Psoas muscle (tissue), 8 donors: ENCODE measurements at regions of chr14 and their contacts with region 1.

Region 1: DNA sequence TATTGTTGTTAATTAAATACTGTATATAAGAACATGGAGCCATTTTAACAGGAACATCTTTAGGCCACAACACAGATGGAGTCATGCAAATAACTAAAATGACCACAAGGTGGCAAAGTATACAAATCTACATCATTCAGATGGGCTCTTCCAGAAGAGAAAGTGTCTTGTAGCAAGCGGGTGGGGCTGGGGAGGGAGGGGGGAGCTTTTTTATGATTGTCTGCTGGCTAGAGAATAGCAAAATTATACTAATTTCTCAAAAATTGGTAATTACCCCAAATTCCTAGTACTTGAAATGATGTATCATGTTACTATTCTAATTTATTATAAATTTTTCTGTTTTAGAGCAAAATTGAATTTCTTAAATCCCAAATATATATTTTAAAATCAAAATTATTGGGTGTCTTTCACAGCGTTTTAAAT is 378.7 kb downstream of the PRKD1 start:
- DNase-seq: no peak
- ATAC-seq: peak; percentile 60 to 88 (median 75)
- H3K4me3 ChIP-seq: no peak overlapping the region
- H3K27ac ChIP-seq: no peak overlapping the region
- H3K4me1 ChIP-seq: no peaks in the 10 kb centered on the region
- H3K27me3 ChIP-seq: peaks cover 0 to 3% (median 0%) of the 10 kb centered on the region in 3 donors
- CTCF ChIP-seq: peak; percentile 54

Region 2: DNA sequence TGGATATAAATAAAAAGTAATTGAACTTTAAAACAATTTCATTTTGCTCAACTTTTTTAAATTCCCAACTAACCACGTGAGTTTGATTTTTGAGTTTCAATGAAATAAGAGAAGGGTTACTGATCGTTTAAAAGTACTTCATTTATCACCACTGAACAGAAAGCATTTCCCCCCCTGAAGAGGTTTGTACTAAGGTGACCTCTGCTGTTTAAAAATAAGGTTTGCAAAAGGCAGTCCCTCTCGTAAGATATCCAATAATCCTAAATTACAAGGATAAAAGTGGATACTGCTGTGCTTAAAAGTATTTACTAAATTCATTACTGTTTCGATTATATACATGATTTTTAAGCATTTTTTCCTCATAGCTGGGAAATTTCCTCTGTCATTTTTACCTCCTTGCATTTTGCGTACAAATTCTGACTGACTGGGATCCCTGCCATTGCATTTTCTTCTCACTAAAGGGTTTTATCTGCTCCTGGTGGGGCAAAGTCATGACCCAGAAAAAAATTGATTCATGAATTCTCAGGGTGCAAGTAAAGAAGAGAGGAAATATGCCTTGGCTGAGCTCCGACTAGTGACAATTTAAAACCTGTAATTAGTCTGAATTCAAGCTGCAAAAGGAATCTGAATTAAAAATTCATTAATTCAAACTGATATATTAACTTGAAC is 85.1 kb before region 1 on chr14:
- intact Hi-C with region 1: no loop called
- DNase-seq: no peak
- ATAC-seq: no peak
- H3K4me3 ChIP-seq: no peak overlapping the region
- H3K27ac ChIP-seq: no peak overlapping the region
- H3K4me1 ChIP-seq: no peaks in the 10 kb centered on the region
- H3K27me3 ChIP-seq: peaks cover 0 to 2% (median 0%) of the 10 kb centered on the region in 3 donors
- CTCF ChIP-seq: no peak

Region 3: GRCh38 chr14:29576927-29577326 is 28.0 kb after region 1 on chr14:
- intact Hi-C with region 1: no loop called
- DNase-seq: no peak
- ATAC-seq: no peak
- H3K4me3 ChIP-seq: no peak overlapping the region
- H3K27ac ChIP-seq: no peak overlapping the region
- H3K4me1 ChIP-seq: no peaks in the 10 kb centered on the region
- H3K27me3 ChIP-seq: no peaks in the 10 kb centered on the region
- CTCF ChIP-seq: no peak

Region 4: DNA sequence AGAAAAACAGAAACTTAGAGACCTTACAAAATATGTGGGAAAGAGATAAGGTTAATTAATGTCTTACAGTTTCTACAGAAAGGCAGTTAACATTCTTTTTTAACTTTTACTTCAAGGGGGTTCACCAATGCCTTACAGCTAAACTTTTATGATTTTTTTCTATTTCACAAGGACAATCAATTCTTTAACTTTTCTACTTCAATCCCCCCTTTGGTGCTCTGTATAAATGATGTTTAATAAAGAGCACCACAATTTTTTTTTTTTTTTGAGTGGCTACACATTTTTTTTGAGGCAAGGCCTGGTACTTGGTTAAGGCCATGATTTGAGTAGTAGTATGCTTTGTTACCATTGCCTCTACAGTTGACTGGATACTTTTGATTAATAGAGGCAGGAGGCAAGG is 99.1 kb after region 1 on chr14:
- intact Hi-C with region 1: no loop called
- DNase-seq: no peak
- ATAC-seq: no peak
- H3K4me3 ChIP-seq: no peak overlapping the region
- H3K27ac ChIP-seq: no peak overlapping the region
- H3K4me1 ChIP-seq: no peaks in the 10 kb centered on the region
- H3K27me3 ChIP-seq: no peaks in the 10 kb centered on the region
- CTCF ChIP-seq: no peak

Region 5: GRCh38 chr14:30005114-30005808 is 456.3 kb after region 1 on chr14:
- intact Hi-C with region 1: loop called (anchors 5 kb)
- DNase-seq: no peak
- ATAC-seq: peak in 3 of 4 donors; percentile 37 to 84 (median 64)
- H3K4me3 ChIP-seq: no peak overlapping the region
- H3K27ac ChIP-seq: no peak overlapping the region
- H3K4me1 ChIP-seq: no peaks in the 10 kb centered on the region
- H3K27me3 ChIP-seq: no peaks in the 10 kb centered on the region
- CTCF ChIP-seq: peak; percentile 71

Region 6: DNA sequence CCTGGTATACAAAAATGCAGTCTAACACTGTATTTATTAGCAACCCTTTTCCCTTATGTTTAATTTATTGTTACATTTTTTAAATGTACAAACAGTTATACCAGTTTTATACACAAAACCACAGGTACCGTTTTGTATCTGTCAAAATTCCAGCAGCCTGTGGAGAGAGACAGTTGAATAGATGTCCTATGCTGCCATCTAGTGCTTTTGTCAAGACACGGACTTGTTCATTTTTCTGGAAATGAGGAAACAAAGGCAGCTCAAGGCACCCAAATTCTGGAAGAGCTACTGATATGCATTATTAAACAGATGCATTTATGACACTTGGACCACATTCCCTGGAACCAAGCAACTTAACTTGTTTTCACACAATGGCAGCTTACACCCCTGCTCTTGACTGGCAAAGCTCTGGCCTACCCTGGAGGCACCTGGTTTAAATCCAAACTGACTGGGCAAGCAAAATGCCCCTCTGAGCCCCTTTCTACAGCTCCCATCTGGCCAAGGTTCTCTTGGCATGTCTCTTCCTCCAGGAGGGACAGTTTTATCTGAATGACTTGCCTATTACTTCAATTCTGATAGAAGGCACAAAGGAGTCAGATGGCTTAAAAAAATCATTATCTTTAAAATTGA is 665.6 kb after region 1 on chr14:
- intact Hi-C with region 1: loop called (anchors 2 to 5 kb)
- DNase-seq: no peak
- ATAC-seq: peak in 3 of 4 donors; percentile 42 to 77 (median 63)
- H3K4me3 ChIP-seq: no peak overlapping the region
- H3K27ac ChIP-seq: no peak overlapping the region
- H3K4me1 ChIP-seq: no peaks in the 10 kb centered on the region
- H3K27me3 ChIP-seq: no peaks in the 10 kb centered on the region
- CTCF ChIP-seq: peak; percentile 52